ENCODE measurements at regions of chr2 and their contacts with region 1.

Region 1: DNA sequence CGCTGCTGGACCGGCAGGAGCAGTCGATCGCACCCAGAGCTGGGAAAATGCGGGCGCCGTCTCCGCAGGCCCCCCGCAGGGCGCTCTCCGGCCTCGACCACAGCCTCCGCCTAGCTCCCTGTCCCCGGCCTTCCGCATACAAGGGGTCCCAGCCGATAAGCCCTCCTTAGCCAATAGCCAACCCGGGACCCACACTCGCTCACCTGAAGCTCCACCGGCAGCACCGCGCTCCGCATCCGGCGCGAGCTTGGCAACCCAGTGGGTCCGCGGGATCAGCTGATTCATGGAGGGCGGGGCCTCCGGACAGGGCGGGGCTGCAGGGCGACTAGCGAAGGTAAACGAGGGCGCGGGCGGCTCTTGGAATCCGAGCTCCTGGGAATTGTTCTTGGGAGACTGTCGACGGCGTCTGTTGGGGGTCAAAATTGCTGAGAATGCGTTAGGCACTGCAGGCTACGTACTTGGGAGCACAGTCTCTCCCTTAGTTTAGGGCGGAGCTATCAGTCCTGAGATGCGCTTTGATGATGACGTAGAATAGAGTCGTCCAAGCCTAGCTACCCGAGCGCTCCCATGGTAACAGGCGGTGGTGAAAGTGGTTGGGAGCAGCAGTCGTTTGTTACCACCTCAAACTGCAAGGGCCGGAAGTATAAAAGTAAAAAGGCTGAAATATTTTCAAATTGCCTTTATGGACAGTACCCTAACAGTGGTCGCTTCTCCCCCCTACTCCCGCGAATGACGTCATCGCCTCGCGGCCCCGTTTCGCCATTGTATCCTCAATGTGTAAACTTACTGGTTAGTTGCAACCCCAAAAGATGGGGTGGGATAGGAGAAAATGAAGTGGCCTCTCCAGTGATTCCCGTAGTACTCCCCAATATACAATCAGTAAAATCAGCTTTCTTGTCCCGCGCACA is at the start of gene ALS2:
- DNase-seq: peak; percentile 99
- H3K4me3 ChIP-seq: peak within 1 kb of the TSS; percentile 62 to 95 (median 92)
- H3K27ac ChIP-seq: peak within 1 kb of the TSS; percentile 87 to 95 (median 93)
- H3K4me1 ChIP-seq: peaks cover 0 to 25% (median 5%) of the 10 kb centered on the region in 4 donors
- H3K27me3 ChIP-seq: no peaks in the 10 kb centered on the region
- CTCF ChIP-seq: no peak
- EP300 ChIP-seq: peak in 1 of 4 donors; percentile 42
- POLR2A ChIP-seq: peak in 1 of 2 donors; percentile 23
- total RNA-seq, gene ALS2: 17.4 to 20.9 (median 19.0) TPM

Region 2: GRCh38 chr2:201642579-201643215 is 138.2 kb before region 1 on chr2:
- intact Hi-C with region 1: loop called (anchors 5 kb)
- DNase-seq: peak; percentile 89
- H3K4me3 ChIP-seq: peak overlapping the region; percentile 71 to 84 (median 76)
- H3K27ac ChIP-seq: peak overlapping the region; percentile 93 to 96 (median 94)
- H3K4me1 ChIP-seq: peaks cover 0 to 20% (median 18%) of the 10 kb centered on the region in 4 donors
- H3K27me3 ChIP-seq: no peaks in the 10 kb centered on the region
- CTCF ChIP-seq: no peak
- EP300 ChIP-seq: peak in 1 of 4 donors; percentile 2
- POLR2A ChIP-seq: peak; percentile 48 to 80

Region 3: DNA sequence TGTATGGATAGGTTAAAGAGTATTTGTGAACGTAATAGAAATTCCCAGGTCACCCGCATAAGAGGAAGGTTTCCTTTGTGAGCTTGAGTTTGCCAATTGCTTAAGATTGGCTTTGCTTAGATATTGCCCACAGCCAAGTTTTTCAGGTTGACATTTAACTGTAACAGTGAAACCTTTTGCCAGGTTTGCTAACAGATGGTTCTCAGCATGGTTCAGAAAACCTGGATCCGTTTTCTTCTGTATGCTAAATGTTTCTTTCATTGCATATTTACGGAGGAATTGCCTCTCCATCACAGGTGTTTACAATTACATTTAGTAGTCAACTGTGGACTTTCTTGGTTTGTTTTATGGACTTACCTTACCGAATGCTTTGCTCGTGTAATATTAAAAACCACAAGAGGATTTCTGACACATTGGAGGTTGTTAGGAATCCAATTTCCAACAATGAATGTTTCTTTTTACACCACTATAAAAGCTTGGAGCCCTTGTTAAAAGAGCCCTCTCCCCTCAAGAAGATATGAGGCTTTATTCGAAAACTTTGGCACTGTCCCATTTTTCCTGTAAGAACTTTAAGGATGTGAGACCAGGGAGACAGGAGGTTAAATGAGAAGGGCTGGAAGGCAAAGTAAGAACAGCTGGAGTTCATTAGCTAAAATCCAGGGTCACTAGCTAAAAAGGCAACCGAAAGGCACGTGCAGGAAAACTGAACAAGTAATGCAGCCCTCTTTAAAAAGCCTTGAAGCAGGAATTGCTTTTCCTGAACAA is 33.2 kb after region 1 on chr2:
- intact Hi-C with region 1: no loop called
- DNase-seq: no peak
- H3K4me3 ChIP-seq: no peak overlapping the region
- H3K27ac ChIP-seq: no peak overlapping the region
- H3K4me1 ChIP-seq: no peaks in the 10 kb centered on the region
- H3K27me3 ChIP-seq: no peaks in the 10 kb centered on the region
- CTCF ChIP-seq: no peak
- EP300 ChIP-seq: no peak
- POLR2A ChIP-seq: no peak

Region 4: DNA sequence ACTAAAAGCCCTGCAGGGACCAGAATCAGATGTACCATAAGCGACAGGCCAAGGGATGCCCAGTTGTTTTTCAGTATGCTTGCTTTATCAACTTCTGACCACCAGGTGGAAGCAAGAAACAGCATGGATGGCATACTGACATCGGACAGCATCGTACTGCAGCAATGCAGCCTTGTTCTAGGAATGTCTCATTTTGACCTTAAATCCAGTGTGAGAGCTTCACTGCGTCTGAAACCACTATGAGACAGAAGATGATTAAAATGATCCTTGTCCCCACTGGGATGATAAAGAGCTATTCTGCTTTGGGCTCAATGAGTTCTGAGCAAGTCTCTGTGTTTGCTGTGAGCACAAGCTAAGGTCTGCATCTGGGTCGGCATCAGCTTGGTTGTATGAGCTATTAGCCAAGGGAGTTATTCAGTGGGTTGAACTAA is 79.7 kb after region 1 on chr2:
- intact Hi-C with region 1: loop called (anchors 5 kb)
- DNase-seq: peak; percentile 68
- H3K4me3 ChIP-seq: no peak overlapping the region
- H3K27ac ChIP-seq: no peak overlapping the region
- H3K4me1 ChIP-seq: peaks cover 0 to 24% (median 11%) of the 10 kb centered on the region in 4 donors
- H3K27me3 ChIP-seq: no peaks in the 10 kb centered on the region
- CTCF ChIP-seq: peak; percentile 68 to 85 (median 84)
- EP300 ChIP-seq: no peak
- POLR2A ChIP-seq: no peak